ENCODE measurements at regions of chr20 and their contacts with region 1.

Region 1: GRCh38 chr20:266596-267562 is 9.4 kb downstream of the DEFB132 start:
- DNase-seq: peak; percentile 85 to 87
- ATAC-seq: peak; percentile 87 to 94 (median 94)
- H3K4me3 ChIP-seq: peak overlapping the region; percentile 15 to 62 (median 57)
- H3K27ac ChIP-seq: no peak overlapping the region
- H3K4me1 ChIP-seq: peaks cover 0 to 13% (median 0%) of the 10 kb centered on the region in 9 donors
- H3K27me3 ChIP-seq: peaks cover 0 to 3% (median 0%) of the 10 kb centered on the region in 7 donors
- CTCF ChIP-seq: peak; percentile 95 to 99 (median 97)

Region 2: GRCh38 chr20:79565-79964 is 187.3 kb before region 1 on chr20:
- intact Hi-C with region 1: no loop called
- DNase-seq: no peak
- ATAC-seq: no peak
- H3K4me3 ChIP-seq: no peak overlapping the region
- H3K27ac ChIP-seq: no peak overlapping the region
- H3K4me1 ChIP-seq: no peaks in the 10 kb centered on the region
- H3K27me3 ChIP-seq: peaks cover 0 to 18% (median 5%) of the 10 kb centered on the region in 7 donors
- CTCF ChIP-seq: no peak

Region 3: DNA sequence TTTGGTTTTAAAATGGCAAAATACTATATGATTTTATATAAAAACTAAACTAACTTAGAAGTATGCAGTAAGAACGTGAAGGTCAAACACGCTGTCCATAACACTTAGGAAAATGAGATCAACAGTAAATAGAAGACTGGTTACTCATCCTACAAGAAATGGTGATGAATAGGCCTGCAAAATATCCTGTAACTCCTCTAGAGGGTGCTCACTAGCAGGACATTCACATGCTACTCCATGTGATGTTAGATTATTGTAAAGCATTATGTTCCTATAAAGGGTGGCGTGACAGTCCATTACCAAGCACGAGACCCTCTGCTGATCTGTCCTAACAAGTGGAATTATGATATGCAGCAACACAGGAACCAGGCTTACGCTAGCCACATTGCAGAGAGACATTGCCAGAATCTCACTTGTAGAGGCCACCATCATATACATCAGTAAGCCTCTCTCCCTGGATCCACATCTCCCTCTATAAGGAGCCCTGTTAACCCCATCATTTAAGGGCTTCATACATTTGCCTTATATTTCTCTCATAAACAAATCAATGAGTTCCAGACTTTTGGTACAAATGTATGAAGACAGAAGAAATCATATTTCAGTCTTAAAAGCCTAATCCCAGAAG is 57.8 kb before region 1 on chr20:
- intact Hi-C with region 1: loop called in 2 of 10 experiments (anchors 5 kb)
- DNase-seq: peak in 1 of 2 donors; percentile 9
- ATAC-seq: peak in 7 of 8 donors; percentile 29 to 84 (median 72)
- H3K4me3 ChIP-seq: no peak overlapping the region
- H3K27ac ChIP-seq: no peak overlapping the region
- H3K4me1 ChIP-seq: peaks cover 0 to 4% (median 0%) of the 10 kb centered on the region in 9 donors
- H3K27me3 ChIP-seq: peaks cover 0 to 8% (median 0%) of the 10 kb centered on the region in 7 donors
- CTCF ChIP-seq: peak in 8 of 9 donors; percentile 23 to 64 (median 57)

Region 4: GRCh38 chr20:543369-544152 is 276.7 kb after region 1 on chr20 and contains the start of gene CSNK2A1:
- intact Hi-C with region 1: no loop called
- DNase-seq: peak; percentile 95
- ATAC-seq: peak; percentile 98 to 99 (median 99)
- H3K4me3 ChIP-seq: peak within 1 kb of the TSS; percentile 81 to 99 (median 96)
- H3K27ac ChIP-seq: peak within 1 kb of the TSS; percentile 87 to 98 (median 94)
- H3K4me1 ChIP-seq: peaks cover 8 to 54% (median 40%) of the 10 kb centered on the region in 9 donors
- H3K27me3 ChIP-seq: no peaks in the 10 kb centered on the region
- CTCF ChIP-seq: no peak
- total RNA-seq, gene CSNK2A1: 111 to 137 (median 129) TPM

Measured in heart right ventricle (tissue), 16 donors.